Common myeloid progenitor, CD34-positive (primary cell): ENCODE measurements at regions of chr11 and their contacts with region 1.

Region 1: GRCh38 chr11:35822815-35823495 is 120.9 kb upstream of the LDLRAD3 start:
- DNase-seq: peak in 2 of 3 donors; percentile 18 to 30
- H3K4me3 ChIP-seq: no peak overlapping the region
- H3K27ac ChIP-seq: no peak overlapping the region
- H3K4me1 ChIP-seq: peaks cover 0 to 5% (median 2%) of the 10 kb centered on the region in 4 experiments
- H3K27me3 ChIP-seq: no peaks in the 10 kb centered on the region

Region 2: GRCh38 chr11:35683728-35684339 is 139.1 kb before region 1 on chr11:
- CTCF ChIA-PET with region 1: no interaction called
- POLR2A ChIA-PET with region 1: no interaction called
- DNase-seq: peak in 2 of 3 donors; percentile 9 to 23
- H3K4me3 ChIP-seq: no peak overlapping the region
- H3K27ac ChIP-seq: no peak overlapping the region
- H3K4me1 ChIP-seq: peaks cover 2 to 12% (median 4%) of the 10 kb centered on the region in 4 experiments
- H3K27me3 ChIP-seq: no peaks in the 10 kb centered on the region

Region 3: DNA sequence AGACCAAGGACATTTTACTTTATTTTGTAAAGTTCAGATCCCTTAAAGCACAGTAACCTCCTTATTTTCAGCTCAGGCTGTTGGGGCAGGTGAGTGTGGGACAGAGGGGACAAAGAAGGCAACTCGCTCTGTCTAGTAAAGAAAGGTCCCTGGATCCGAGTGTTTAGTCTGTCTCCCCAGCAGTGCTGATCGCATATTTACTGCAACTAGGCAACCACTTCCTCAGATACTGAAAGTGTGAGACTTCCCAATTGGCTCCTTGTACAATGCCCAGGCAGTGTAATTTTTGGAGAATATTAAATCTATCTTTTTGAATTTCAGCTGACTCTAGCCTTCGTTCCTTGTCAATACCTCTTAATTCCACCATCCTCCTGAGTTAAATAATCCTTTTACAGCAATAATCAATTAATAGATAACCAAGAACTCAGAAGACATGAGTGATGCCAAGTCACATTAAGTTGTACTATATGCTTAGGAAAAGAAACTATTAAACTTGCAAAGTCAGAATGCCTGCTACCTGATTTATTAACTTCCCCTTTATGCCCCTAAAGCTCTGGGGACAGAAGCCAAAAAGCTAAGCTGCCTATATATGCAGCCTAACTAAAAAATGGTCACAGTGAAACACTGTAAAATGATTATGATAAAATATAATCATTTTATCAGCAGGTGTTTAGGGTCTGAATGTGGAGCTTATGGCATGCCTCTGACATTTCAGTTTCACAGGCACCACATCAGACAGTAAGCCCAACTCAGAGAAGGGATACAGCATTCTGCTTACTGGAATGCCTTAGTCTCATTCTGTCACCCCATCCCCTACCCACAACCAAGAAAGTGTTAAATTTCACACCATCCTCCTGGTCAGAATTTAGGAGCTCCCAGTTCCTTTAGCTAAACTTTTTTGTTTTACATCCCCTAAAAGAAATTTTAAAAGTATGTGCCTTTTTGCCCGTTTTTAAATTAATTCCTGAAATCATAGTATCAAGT is 21.7 kb before region 1 on chr11:
- CTCF ChIA-PET with region 1: interaction called, 67 read pairs
- POLR2A ChIA-PET with region 1: interaction called, 3 read pairs
- DNase-seq: peak; percentile 76 to 94 (median 91)
- H3K4me3 ChIP-seq: peak overlapping the region in 4 of 7 experiments; percentile 8 to 67 (median 45)
- H3K27ac ChIP-seq: peak overlapping the region; percentile 95 to 97
- H3K4me1 ChIP-seq: peaks cover 10 to 26% (median 15%) of the 10 kb centered on the region in 4 experiments
- H3K27me3 ChIP-seq: no peaks in the 10 kb centered on the region

Region 4: GRCh38 chr11:35811775-35812174 is 11.2 kb before region 1 on chr11:
- CTCF ChIA-PET with region 1: interaction called, 44 read pairs
- POLR2A ChIA-PET with region 1: no interaction called
- DNase-seq: peak; percentile 53 to 86 (median 75)
- H3K4me3 ChIP-seq: peak overlapping the region in 1 of 7 experiments; percentile 15
- H3K27ac ChIP-seq: peak overlapping the region in 1 of 2 experiments; percentile 10
- H3K4me1 ChIP-seq: peaks cover 6 to 34% (median 14%) of the 10 kb centered on the region in 4 experiments
- H3K27me3 ChIP-seq: no peaks in the 10 kb centered on the region

Region 5: GRCh38 chr11:36258730-36259360 is 435.9 kb after region 1 on chr11:
- CTCF ChIA-PET with region 1: interaction called, 15 read pairs
- POLR2A ChIA-PET with region 1: no interaction called
- DNase-seq: peak; percentile 48 to 70 (median 68)
- H3K4me3 ChIP-seq: no peak overlapping the region
- H3K27ac ChIP-seq: no peak overlapping the region
- H3K4me1 ChIP-seq: peaks cover 0 to 3% (median 0%) of the 10 kb centered on the region in 4 experiments
- H3K27me3 ChIP-seq: peaks cover 0 to 54% (median 7%) of the 10 kb centered on the region in 5 experiments

Region 6: DNA sequence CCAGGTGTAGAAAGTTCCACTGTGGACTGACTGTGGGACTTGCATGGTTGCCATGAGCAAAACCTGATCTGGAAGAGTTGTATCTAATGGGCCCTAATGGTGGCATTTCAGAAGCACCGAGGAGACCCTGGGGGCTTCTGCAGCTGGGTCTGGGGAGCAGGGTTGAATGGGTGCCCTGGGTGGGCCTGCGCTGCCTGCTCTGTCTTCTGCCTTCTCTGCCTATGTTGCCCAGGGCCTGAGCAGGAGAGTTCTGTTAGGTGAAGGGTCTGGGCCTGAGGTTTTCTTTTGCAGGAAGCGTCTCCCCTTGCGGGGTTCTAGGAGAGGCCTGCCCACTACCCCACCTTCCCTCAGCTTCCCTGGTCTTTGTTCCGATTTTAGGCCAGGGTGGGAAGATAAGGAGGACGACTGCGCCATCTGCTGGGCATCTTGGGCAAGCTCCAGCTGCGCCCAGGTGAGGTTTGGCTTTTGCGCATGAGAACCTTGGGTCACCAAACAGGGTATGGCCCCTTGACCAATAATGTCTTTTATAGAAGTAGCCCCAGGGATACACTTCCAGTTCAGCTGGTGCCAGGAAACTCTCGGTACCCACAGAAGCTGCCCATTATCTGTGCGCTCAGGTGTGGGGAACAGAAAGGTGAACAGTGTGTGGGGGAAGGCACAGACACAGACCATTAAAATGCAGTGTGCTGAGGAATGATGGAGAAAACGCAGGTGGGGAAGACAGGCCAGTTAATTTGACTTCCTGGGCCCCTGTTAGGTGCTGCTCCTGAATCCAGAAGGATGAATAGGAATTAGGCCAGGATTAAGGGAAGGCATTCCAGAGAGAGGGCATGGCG is 443.1 kb after region 1 on chr11:
- CTCF ChIA-PET with region 1: interaction called, 10 read pairs
- POLR2A ChIA-PET with region 1: no interaction called
- DNase-seq: peak; percentile 37 to 65 (median 45)
- H3K4me3 ChIP-seq: no peak overlapping the region
- H3K27ac ChIP-seq: no peak overlapping the region
- H3K4me1 ChIP-seq: peaks cover 0 to 2% (median 0%) of the 10 kb centered on the region in 4 experiments
- H3K27me3 ChIP-seq: peaks cover 0 to 25% (median 9%) of the 10 kb centered on the region in 5 experiments